Caco-2 (cell line): ENCODE measurements at regions of chr10 and their contacts with region 1.

Region 1: GRCh38 chr10:29239569-29240472 is 49.0 kb upstream of the LYZL1 start:
- DNase-seq: peak; percentile 74 to 78
- H3K4me3 ChIP-seq: no peak overlapping the region
- H3K4me3 Mint-ChIP-seq: no peak overlapping the region
- H3K27ac Mint-ChIP-seq: peak overlapping the region; percentile 55
- H3K4me1 ChIP-seq: peaks cover 45% of the 10 kb centered on the region
- H3K4me1 Mint-ChIP-seq: peaks cover 28% of the 10 kb centered on the region
- H3K27me3 ChIP-seq: no peaks in the 10 kb centered on the region
- H3K27me3 Mint-ChIP-seq: no peaks in the 10 kb centered on the region
- CTCF ChIP-seq: peak; percentile 79 to 87

Region 2: GRCh38 chr10:29131952-29132820 is 107.6 kb before region 1 on chr10:
- CTCF ChIA-PET with region 1: no interaction called
- POLR2A ChIA-PET with region 1: no interaction called
- intact Hi-C with region 1: loop called (anchors 2 kb)
- DNase-seq: no peak
- H3K4me3 ChIP-seq: no peak overlapping the region
- H3K4me3 Mint-ChIP-seq: no peak overlapping the region
- H3K27ac Mint-ChIP-seq: peak overlapping the region; percentile 51
- H3K4me1 ChIP-seq: peaks cover 33% of the 10 kb centered on the region
- H3K4me1 Mint-ChIP-seq: peaks cover 15% of the 10 kb centered on the region
- H3K27me3 ChIP-seq: no peaks in the 10 kb centered on the region
- H3K27me3 Mint-ChIP-seq: no peaks in the 10 kb centered on the region
- CTCF ChIP-seq: no peak

Region 3: GRCh38 chr10:29204070-29204800 is 35.6 kb before region 1 on chr10:
- CTCF ChIA-PET with region 1: no interaction called
- POLR2A ChIA-PET with region 1: no interaction called
- intact Hi-C with region 1: loop called (anchors 2 kb)
- DNase-seq: peak; percentile 67 to 78
- H3K4me3 ChIP-seq: no peak overlapping the region
- H3K4me3 Mint-ChIP-seq: no peak overlapping the region
- H3K27ac Mint-ChIP-seq: peak overlapping the region; percentile 54
- H3K4me1 ChIP-seq: peaks cover 14% of the 10 kb centered on the region
- H3K4me1 Mint-ChIP-seq: peaks cover 16% of the 10 kb centered on the region
- H3K27me3 ChIP-seq: no peaks in the 10 kb centered on the region
- H3K27me3 Mint-ChIP-seq: no peaks in the 10 kb centered on the region
- CTCF ChIP-seq: no peak

Region 4: GRCh38 chr10:29304264-29305030 is 64.6 kb after region 1 on chr10:
- CTCF ChIA-PET with region 1: interaction called, 18 read pairs
- POLR2A ChIA-PET with region 1: no interaction called
- intact Hi-C with region 1: loop called (anchors 1 kb)
- DNase-seq: peak; percentile 74 to 86
- H3K4me3 ChIP-seq: no peak overlapping the region
- H3K4me3 Mint-ChIP-seq: peak overlapping the region; percentile 55
- H3K27ac Mint-ChIP-seq: peak overlapping the region; percentile 48
- H3K4me1 ChIP-seq: peaks cover 14% of the 10 kb centered on the region; the same call in 1 of the 2 replicates
- H3K4me1 Mint-ChIP-seq: no peaks in the 10 kb centered on the region
- H3K27me3 ChIP-seq: no peaks in the 10 kb centered on the region
- H3K27me3 Mint-ChIP-seq: no peaks in the 10 kb centered on the region
- CTCF ChIP-seq: peak; percentile 95 to 99

Region 5: GRCh38 chr10:29392376-29393021 is 152.7 kb after region 1 on chr10:
- CTCF ChIA-PET with region 1: no interaction called
- POLR2A ChIA-PET with region 1: interaction called, 4 read pairs
- intact Hi-C with region 1: loop called (anchors 5 kb)
- DNase-seq: peak; percentile 62 to 76
- H3K4me3 ChIP-seq: no peak overlapping the region
- H3K4me3 Mint-ChIP-seq: no peak overlapping the region
- H3K27ac Mint-ChIP-seq: no peak overlapping the region
- H3K4me1 ChIP-seq: no peaks in the 10 kb centered on the region
- H3K4me1 Mint-ChIP-seq: no peaks in the 10 kb centered on the region
- H3K27me3 ChIP-seq: no peaks in the 10 kb centered on the region
- H3K27me3 Mint-ChIP-seq: peaks cover 5% of the 10 kb centered on the region
- CTCF ChIP-seq: peak; percentile 93 to 95